Calu3 (cell line): ENCODE measurements at regions of chr6 and their contacts with region 1.

Region 1: DNA sequence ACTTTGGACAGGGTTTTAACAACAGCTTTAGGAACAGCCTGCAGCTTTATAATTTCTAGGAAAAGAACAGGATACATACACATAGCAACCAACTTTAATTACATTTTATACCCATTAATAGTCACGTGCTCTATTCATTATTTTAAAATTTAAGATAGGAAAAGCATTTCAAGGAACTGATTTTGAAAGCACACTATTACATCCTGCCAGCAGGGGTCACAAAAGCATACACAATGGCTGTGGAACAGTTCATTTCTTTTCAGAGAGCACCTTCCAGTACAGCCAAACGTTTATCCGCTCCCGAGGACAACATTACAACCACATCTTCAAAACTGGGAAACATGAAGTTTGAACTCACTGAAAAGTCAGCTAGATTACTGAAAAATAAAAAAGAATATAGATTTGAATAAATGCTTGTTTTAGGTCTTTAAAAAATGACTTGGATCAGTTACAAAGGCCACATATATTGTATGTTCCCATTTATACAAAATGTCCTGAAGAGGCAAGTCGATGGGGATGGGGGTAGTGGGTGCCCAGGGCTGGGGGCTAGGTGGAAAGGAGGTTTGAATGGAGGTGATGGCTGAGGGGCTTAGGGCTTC is 104.6 kb upstream of the EXOC2 start:
- DNase-seq: peak; percentile 57
- H3K4me3 Mint-ChIP-seq: no peak overlapping the region
- H3K27ac Mint-ChIP-seq: no peak overlapping the region
- H3K4me1 Mint-ChIP-seq: no peaks in the 10 kb centered on the region
- H3K27me3 Mint-ChIP-seq: no peaks in the 10 kb centered on the region
- CTCF ChIP-seq: peak; percentile 30

Region 2: GRCh38 chr6:781350-781961 is 16.1 kb before region 1 on chr6:
- CTCF ChIA-PET with region 1: no interaction called
- intact Hi-C with region 1: no loop called
- DNase-seq: no peak
- H3K4me3 Mint-ChIP-seq: no peak overlapping the region
- H3K27ac Mint-ChIP-seq: no peak overlapping the region
- H3K4me1 Mint-ChIP-seq: peaks cover under 1% of the 10 kb centered on the region
- H3K27me3 Mint-ChIP-seq: peaks cover 42% of the 10 kb centered on the region
- CTCF ChIP-seq: no peak

Region 3: DNA sequence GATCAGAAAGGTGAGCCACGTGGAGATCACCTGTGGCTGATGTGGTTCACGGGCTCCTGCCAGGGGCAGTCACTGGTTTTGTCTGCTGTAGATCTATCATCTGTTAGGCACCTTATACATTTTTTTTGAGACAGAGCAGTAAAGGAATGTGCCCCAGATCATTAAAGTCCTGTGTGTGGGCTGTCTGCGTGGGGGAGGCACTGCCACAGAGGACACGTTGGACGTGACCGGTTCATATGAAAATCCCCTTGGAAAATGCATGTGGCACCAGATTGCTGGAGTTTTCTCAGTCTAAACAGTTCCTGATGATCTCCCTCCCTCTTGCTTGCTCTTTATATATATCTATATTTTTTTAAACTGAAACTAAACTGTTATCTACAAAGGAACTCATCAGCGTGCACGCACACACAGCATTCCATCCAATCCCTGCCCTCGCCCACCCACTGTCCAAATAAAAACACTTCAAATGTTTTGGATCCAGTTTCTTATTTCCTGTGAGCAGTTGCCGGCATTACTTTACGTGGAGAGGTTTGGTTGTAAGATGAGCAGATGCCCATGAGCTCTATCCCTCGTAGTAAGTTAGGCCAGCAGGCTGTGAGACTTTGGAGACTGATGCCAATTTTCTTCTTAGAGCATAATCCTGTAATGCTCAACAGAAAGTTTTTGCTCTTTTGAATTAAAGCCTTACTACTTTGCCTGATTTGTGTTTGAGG is 57.0 kb after region 1 on chr6:
- CTCF ChIA-PET with region 1: no interaction called
- intact Hi-C with region 1: no loop called
- DNase-seq: no peak
- H3K4me3 Mint-ChIP-seq: no peak overlapping the region
- H3K27ac Mint-ChIP-seq: no peak overlapping the region
- H3K4me1 Mint-ChIP-seq: no peaks in the 10 kb centered on the region
- H3K27me3 Mint-ChIP-seq: peaks cover 38% of the 10 kb centered on the region
- CTCF ChIP-seq: no peak

Region 4: GRCh38 chr6:903761-904160 is 106.2 kb after region 1 on chr6:
- CTCF ChIA-PET with region 1: no interaction called
- intact Hi-C with region 1: loop called (anchors 5 kb)
- DNase-seq: peak; percentile 13
- H3K4me3 Mint-ChIP-seq: no peak overlapping the region
- H3K27ac Mint-ChIP-seq: no peak overlapping the region
- H3K4me1 Mint-ChIP-seq: no peaks in the 10 kb centered on the region
- H3K27me3 Mint-ChIP-seq: no peaks in the 10 kb centered on the region
- CTCF ChIP-seq: no peak

Region 5: DNA sequence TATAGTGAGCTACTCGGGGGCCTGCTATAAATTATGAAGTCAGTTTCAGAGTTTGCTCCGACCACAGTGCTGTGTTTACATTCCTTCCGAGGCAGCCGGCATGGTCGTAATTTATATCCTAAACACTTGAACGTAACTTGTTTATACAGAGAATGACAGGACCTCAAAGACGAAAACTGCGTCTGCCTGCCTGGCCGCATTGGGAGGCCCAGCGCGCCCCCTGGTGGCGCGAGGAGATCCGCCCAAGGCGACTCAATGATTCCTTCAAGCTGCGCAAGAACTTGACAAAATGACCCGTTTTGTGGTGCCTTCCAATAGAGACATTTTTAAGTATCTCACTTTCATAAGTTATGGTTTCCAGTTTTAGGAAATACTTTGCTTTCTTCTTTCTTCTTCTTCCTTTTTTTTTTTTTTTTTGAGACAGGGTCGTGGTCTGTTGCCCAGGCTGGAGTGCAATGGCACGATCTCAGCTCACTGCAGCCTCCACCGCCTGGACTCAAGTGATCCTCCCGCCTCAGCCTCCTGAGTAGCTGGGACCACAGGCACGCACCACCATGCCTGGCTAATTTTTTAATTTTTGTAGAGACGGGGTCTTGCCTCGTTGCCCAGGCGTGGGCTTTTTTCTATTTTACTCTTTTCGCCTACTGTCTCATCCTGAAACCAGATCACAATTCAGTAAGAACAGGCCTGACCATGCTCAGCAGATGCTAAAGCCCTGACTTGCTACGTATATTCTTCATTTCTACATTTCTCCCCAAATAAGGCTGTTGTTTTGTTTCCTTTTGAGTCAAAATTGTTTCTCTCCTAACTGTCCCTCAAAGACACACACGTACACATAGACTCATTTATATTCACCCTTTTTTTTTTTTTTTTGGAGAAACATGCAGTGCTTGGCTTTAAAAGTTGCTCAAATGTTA is 599.6 kb after region 1 on chr6:
- CTCF ChIA-PET with region 1: interaction called, 4 read pairs
- intact Hi-C with region 1: loop called (anchors 10 kb)
- DNase-seq: peak; percentile 69
- H3K4me3 Mint-ChIP-seq: no peak overlapping the region
- H3K27ac Mint-ChIP-seq: no peak overlapping the region
- H3K4me1 Mint-ChIP-seq: no peaks in the 10 kb centered on the region
- H3K27me3 Mint-ChIP-seq: peaks cover 62% of the 10 kb centered on the region
- CTCF ChIP-seq: peak; percentile 56